ENCODE measurements at regions of chr16 and their contacts with region 1.

Region 1: GRCh38 chr16:57045694-57046381 is 46.5 kb upstream of the CPNE2 start:
- DNase-seq: peak; percentile 57
- ATAC-seq: peak; percentile 25
- H3K4me3 Mint-ChIP-seq: peak overlapping the region; percentile 68
- H3K27ac Mint-ChIP-seq: peak overlapping the region; percentile 92
- H3K4me1 Mint-ChIP-seq: peaks cover 87% of the 10 kb centered on the region
- H3K27me3 Mint-ChIP-seq: no peaks in the 10 kb centered on the region
- CTCF ChIP-seq: no peak

Region 2: DNA sequence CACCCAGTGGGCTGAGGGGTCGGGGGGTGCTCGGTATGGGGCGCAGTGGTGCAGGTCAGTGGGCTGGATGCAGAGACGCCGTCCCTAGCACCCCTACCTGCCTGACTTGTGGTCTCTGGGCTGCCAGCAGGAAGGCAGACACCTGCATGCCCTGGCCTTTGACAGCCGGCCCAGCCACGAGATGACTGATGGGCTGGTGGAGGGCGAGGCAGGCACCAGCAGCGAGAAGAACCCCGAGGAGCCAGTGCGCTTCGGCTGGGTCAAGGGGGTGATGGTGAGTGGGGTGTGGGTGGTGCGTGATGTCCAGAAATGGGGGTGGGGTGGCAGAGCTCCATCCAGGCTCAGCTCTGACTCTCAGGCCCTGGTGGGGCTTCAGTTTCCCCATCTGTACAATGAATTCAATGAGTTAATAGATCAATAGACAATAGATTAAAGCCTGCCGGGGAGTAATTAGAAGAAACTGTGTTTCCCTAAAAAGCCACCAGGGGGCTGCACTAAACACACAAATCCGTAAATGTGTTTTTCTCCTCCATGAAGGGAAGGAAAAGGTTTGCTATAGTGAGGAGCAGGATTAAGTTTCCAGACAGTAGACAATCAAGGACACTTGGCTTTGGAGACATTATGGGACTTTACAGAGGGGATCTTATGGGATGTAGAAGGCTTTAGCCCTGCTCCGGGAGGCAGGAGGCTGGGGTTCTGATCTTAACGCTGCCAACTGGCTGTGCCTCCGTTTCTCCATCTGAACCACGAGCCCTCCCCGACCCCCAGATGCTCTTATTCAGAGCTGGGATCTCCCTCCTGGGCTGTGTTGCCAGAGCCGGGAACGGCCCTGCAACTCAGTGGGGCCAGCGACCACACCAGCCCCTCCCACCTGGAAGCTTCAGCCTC is 178.7 kb before region 1 on chr16:
- CTCF ChIA-PET with region 1: interaction called, 8 read pairs
- POLR2A ChIA-PET with region 1: interaction called, 4 read pairs
- intact Hi-C with region 1: loop called (anchors 1 kb)
- DNase-seq: no peak
- ATAC-seq: no peak
- H3K4me3 Mint-ChIP-seq: peak overlapping the region; percentile 24
- H3K27ac Mint-ChIP-seq: peak overlapping the region; percentile 69
- H3K4me1 Mint-ChIP-seq: peaks cover 46% of the 10 kb centered on the region
- H3K27me3 Mint-ChIP-seq: no peaks in the 10 kb centered on the region
- CTCF ChIP-seq: no peak

Region 3: DNA sequence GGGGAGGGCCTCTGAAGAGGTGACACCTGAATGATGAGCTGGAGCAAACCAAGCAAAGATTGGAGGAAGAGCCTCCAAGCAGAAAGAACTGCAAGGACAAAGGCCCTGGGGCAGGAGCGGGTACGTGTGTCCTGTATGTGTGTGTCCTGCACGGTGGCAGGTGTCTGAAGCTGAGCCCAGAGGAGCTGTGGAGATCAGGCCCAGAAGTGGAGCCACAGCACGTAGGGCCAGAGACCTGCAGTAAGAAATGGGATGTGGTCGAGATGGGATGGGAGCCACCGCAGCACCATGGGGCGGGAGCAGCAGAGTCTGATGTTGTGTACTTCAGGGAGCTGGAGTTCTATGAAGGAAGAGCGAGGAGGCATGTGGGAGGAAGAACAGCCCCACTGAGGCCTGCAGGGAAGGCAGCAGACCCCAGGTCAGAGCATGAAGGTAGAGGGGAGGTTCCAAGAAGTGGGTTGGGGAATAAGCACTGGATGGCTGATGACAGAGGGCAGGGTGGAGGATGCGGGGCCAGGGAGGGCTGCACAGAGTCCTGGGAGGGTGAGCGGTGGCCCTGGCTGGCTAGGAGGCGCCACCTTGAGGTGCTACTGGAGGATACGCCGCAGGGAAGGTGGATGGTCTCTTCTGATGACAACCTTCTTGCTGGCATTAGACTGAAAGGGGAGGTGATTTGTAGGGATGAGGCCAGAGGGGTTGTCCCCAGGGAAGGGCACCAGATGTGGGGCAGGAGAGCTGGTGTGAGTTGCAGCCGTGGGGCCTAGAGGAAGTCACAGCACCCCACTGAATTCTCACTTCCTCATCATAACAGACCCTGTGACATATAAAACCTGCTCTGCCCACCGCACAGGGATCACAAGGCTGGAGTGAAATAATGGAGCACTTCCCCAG is 94.7 kb before region 1 on chr16:
- CTCF ChIA-PET with region 1: interaction called, 5 read pairs
- POLR2A ChIA-PET with region 1: interaction called, 12 read pairs
- intact Hi-C with region 1: loop called (anchors 1 kb)
- DNase-seq: peak; percentile 68
- ATAC-seq: peak; percentile 90
- H3K4me3 Mint-ChIP-seq: peak overlapping the region; percentile 60
- H3K27ac Mint-ChIP-seq: peak overlapping the region; percentile 74
- H3K4me1 Mint-ChIP-seq: peaks cover 48% of the 10 kb centered on the region
- H3K27me3 Mint-ChIP-seq: no peaks in the 10 kb centered on the region
- CTCF ChIP-seq: no peak

Region 4: GRCh38 chr16:56980792-56981724 is 64.8 kb before region 1 on chr16:
- CTCF ChIA-PET with region 1: interaction called, 5 read pairs
- POLR2A ChIA-PET with region 1: interaction called, 29 read pairs
- intact Hi-C with region 1: no loop called
- DNase-seq: no peak
- ATAC-seq: peak; percentile 75
- H3K4me3 Mint-ChIP-seq: peak overlapping the region; percentile 72
- H3K27ac Mint-ChIP-seq: peak overlapping the region; percentile 84
- H3K4me1 Mint-ChIP-seq: peaks cover 86% of the 10 kb centered on the region
- H3K27me3 Mint-ChIP-seq: no peaks in the 10 kb centered on the region
- CTCF ChIP-seq: no peak

Region 5: GRCh38 chr16:57007530-57007929 is 38.3 kb before region 1 on chr16:
- CTCF ChIA-PET with region 1: interaction called, 5 read pairs
- POLR2A ChIA-PET with region 1: interaction called, 93 read pairs
- intact Hi-C with region 1: no loop called
- DNase-seq: no peak
- ATAC-seq: no peak
- H3K4me3 Mint-ChIP-seq: no peak overlapping the region
- H3K27ac Mint-ChIP-seq: peak overlapping the region; percentile 78
- H3K4me1 Mint-ChIP-seq: peaks cover 82% of the 10 kb centered on the region
- H3K27me3 Mint-ChIP-seq: no peaks in the 10 kb centered on the region
- CTCF ChIP-seq: no peak

Region 6: GRCh38 chr16:57084257-57084770 is 38.5 kb after region 1 on chr16:
- CTCF ChIA-PET with region 1: interaction called, 3 read pairs
- POLR2A ChIA-PET with region 1: no interaction called
- intact Hi-C with region 1: loop called (anchors 5 kb)
- DNase-seq: peak; percentile 50
- ATAC-seq: peak; percentile 89
- H3K4me3 Mint-ChIP-seq: no peak overlapping the region
- H3K27ac Mint-ChIP-seq: peak overlapping the region; percentile 57
- H3K4me1 Mint-ChIP-seq: peaks cover 8% of the 10 kb centered on the region
- H3K27me3 Mint-ChIP-seq: no peaks in the 10 kb centered on the region
- CTCF ChIP-seq: peak; percentile 77

Measured in activated B cell treated with CpG ODN at 0.5 μM for 24 hours (primary cell).